GM10248 (cell line): ENCODE measurements at regions of chrX and their contacts with region 1.

Region 1: GRCh38 chrX:72245461-72246089 is 6.7 kb upstream of the ERCC6L start:
- DNase-seq: peak; percentile 49
- CTCF ChIP-seq: peak; percentile 64

Region 2: DNA sequence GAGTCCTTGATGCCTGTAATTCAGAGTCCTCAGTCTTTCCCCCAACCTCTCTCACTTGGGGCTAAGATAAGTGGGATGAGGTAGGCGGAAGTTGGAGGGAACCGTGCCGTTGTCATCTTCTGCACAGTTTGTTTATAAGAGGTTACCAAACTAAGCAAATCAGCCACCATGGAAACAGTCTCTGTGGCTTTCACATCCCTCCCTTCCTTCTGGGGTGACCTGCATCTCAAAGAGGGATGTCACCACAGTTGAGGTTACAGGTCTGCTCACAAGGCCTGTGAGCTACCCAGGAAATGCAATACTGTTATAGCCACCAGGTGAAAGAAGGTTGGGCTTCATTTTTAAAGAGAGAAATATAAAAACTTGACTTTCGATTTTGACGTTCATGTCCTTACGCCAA is 140.1 kb before region 1 on chrX:
- CTCF ChIA-PET with region 1: no interaction called
- POLR2A ChIA-PET with region 1: no interaction called
- DNase-seq: peak; percentile 54
- CTCF ChIP-seq: no peak

Region 3: GRCh38 chrX:72159769-72160168 is 85.8 kb before region 1 on chrX:
- CTCF ChIA-PET with region 1: no interaction called
- POLR2A ChIA-PET with region 1: no interaction called
- DNase-seq: no peak
- CTCF ChIP-seq: no peak

Region 4: DNA sequence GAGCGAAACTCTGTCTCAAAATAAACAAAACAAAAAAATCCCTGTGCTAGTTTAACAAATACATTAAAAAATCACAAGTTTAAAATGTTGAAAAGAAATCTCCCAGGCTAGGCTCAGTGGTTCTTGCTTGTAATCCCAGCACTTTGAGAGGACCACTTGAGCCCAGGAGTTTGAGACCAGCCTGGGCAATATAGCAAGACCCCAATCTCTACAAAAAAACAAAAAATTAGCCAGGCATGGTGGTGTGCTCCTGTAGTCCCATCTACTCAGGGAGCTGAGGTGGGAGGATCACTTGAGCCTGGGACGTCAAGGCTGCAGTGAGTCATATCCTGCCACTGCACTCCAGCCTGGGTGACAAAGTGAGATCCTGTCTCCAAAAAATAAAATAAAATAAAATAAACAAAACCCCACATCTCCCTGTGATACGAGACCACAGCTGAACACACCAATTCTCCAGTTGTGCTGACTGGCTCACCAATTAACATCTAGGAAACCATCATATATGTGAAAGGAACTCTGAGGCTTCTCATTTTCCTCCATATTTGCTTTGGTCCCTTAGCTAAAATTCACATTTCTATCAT is 24.2 kb after region 1 on chrX:
- CTCF ChIA-PET with region 1: interaction called, 12 read pairs
- POLR2A ChIA-PET with region 1: no interaction called
- DNase-seq: no peak
- CTCF ChIP-seq: no peak

Region 5: DNA sequence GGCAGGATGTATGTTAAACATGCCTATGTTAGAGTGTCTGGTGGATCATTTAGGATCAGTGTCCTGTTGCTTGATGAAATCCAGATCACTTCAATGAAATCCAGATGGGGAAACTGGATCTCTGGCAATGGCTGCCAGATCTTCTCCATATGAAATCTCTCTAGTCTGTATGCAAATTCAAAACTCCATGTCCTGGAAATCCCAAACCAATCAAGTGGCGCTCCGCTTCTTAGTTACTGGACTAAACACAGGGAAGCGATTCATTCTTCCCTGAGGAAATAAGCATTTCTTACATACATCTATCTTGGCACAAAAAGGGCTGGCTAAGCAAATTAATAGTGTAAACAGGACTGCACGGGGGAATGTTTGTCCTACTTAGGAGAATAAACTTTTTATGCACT is 232.2 kb after region 1 on chrX:
- CTCF ChIA-PET with region 1: no interaction called
- POLR2A ChIA-PET with region 1: no interaction called
- DNase-seq: no peak
- CTCF ChIP-seq: no peak